ENCODE measurements at regions of chr20 and their contacts with region 1.

Region 1: GRCh38 chr20:21303061-21303871 is at the start of gene XRN2:
- DNase-seq: peak; percentile 96
- H3K4me3 ChIP-seq: peak within 1 kb of the TSS; percentile 86
- H3K27ac ChIP-seq: peak within 1 kb of the TSS; percentile 98
- H3K4me1 ChIP-seq: peaks cover 6% of the 10 kb centered on the region
- H3K27me3 ChIP-seq: no peaks in the 10 kb centered on the region
- CTCF ChIP-seq: no peak; the same call in 1 of the 2 replicates
- total RNA-seq, gene XRN2: 121 and 122 TPM in 2 replicates

Region 2: DNA sequence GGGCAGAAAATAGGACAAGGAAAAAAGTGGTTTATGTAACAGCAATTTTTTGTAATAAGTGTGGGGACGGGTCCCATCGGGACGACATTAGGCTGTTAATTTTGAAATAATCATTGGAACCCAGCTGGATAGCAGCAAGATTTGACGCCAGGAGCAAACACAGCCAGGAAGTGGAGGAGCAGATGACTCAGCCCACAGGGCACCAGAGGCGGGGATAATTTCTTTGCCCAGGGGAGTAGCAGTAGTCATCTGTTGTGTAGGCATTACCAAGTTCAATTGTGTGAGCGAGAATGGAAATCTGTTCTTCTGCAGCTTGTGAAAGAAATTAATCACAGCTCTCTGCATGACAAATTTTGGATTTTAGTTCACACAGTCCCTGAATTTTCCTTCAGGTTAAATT is 1567.8 kb before region 1 on chr20:
- CTCF ChIA-PET with region 1: no interaction called
- POLR2A ChIA-PET with region 1: no interaction called
- intact Hi-C with region 1: loop called (anchors 10 kb)
- DNase-seq: peak; percentile 96
- H3K4me3 ChIP-seq: no peak overlapping the region
- H3K27ac ChIP-seq: peak overlapping the region; percentile 90
- H3K4me1 ChIP-seq: peaks cover 29% of the 10 kb centered on the region
- H3K27me3 ChIP-seq: no peaks in the 10 kb centered on the region
- CTCF ChIP-seq: no peak

Region 3: GRCh38 chr20:21262812-21263211 is 40.5 kb before region 1 on chr20:
- CTCF ChIA-PET with region 1: no interaction called
- POLR2A ChIA-PET with region 1: interaction called, 11 read pairs
- intact Hi-C with region 1: no loop called
- DNase-seq: no peak
- H3K4me3 ChIP-seq: no peak overlapping the region
- H3K27ac ChIP-seq: no peak overlapping the region
- H3K4me1 ChIP-seq: no peaks in the 10 kb centered on the region
- H3K27me3 ChIP-seq: no peaks in the 10 kb centered on the region
- CTCF ChIP-seq: no peak

Region 4: DNA sequence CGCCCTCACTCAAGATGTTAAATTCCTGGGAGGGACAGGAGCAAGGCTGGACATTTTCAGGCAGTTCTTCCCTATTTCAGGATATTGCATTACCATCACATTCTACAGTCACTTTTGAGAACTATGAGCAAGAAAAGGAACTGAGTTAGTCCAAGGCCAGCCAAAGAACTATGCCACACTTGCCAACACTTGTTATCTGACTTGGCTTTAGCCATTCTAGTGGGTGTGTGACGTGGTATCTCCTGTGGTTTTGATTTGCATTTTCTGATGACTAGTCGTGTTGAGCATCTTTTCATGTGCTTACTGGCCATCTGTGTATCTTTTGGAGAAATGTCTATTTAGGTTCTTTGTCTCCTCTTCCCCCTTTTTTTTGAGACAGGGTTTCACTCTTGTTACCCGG is 11.9 kb after region 1 on chr20:
- CTCF ChIA-PET with region 1: no interaction called
- POLR2A ChIA-PET with region 1: interaction called, 12 read pairs
- intact Hi-C with region 1: no loop called
- DNase-seq: no peak
- H3K4me3 ChIP-seq: no peak overlapping the region
- H3K27ac ChIP-seq: no peak overlapping the region
- H3K4me1 ChIP-seq: no peaks in the 10 kb centered on the region
- H3K27me3 ChIP-seq: no peaks in the 10 kb centered on the region
- CTCF ChIP-seq: no peak

Measured in A673 (cell line).